Esophagus squamous epithelium (tissue), 5 donors: ENCODE measurements at regions of chr2 and their contacts with region 1.

Region 1: GRCh38 chr2:219057709-219058540 is 2.8 kb downstream of the IHH start:
- DNase-seq: no peak
- H3K4me3 ChIP-seq: peak overlapping the region in 2 of 4 donors; percentile 8 to 39
- H3K27ac ChIP-seq: no peak overlapping the region
- H3K4me1 ChIP-seq: peaks cover 34 to 46% (median 40%) of the 10 kb centered on the region in 3 donors
- H3K27me3 ChIP-seq: peaks cover 15 to 98% (median 43%) of the 10 kb centered on the region in 4 donors
- CTCF ChIP-seq: peak; percentile 63 to 92 (median 81)
- POLR2A ChIP-seq: no peak

Region 2: GRCh38 chr2:218876562-218877219 is 181.2 kb before region 1 on chr2:
- intact Hi-C with region 1: no loop called
- DNase-seq: no peak
- H3K4me3 ChIP-seq: no peak overlapping the region
- H3K27ac ChIP-seq: no peak overlapping the region
- H3K4me1 ChIP-seq: peaks cover 14 to 47% (median 17%) of the 10 kb centered on the region in 3 donors
- H3K27me3 ChIP-seq: peaks cover 0 to 98% (median 7%) of the 10 kb centered on the region in 4 donors
- CTCF ChIP-seq: peak; percentile 87 to 98 (median 94)
- POLR2A ChIP-seq: no peak

Region 3: DNA sequence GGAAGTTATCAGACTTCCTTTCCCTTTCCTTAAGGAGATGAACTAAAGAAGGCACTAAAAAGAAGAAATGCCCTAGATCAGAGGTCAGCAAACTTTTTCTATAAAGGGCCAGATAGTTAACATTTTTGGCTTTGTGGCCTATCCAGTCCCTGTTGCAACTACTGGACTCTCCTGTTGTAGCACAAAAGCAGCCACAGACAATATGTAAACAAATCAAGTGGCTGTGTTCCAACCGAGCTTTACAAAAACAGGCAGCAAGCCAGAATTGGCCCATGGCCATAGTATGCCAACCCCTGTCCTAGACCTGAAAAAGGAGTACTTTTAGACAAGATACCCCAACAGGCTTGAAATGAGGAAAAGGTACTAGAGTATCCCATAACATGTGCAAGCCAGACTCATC is 91.7 kb after region 1 on chr2:
- intact Hi-C with region 1: loop called (anchors 5 kb)
- DNase-seq: no peak
- H3K4me3 ChIP-seq: no peak overlapping the region
- H3K27ac ChIP-seq: no peak overlapping the region
- H3K4me1 ChIP-seq: peaks cover 0 to 9% (median 0%) of the 10 kb centered on the region in 3 donors
- H3K27me3 ChIP-seq: no peaks in the 10 kb centered on the region
- CTCF ChIP-seq: no peak
- POLR2A ChIP-seq: no peak

Region 4: DNA sequence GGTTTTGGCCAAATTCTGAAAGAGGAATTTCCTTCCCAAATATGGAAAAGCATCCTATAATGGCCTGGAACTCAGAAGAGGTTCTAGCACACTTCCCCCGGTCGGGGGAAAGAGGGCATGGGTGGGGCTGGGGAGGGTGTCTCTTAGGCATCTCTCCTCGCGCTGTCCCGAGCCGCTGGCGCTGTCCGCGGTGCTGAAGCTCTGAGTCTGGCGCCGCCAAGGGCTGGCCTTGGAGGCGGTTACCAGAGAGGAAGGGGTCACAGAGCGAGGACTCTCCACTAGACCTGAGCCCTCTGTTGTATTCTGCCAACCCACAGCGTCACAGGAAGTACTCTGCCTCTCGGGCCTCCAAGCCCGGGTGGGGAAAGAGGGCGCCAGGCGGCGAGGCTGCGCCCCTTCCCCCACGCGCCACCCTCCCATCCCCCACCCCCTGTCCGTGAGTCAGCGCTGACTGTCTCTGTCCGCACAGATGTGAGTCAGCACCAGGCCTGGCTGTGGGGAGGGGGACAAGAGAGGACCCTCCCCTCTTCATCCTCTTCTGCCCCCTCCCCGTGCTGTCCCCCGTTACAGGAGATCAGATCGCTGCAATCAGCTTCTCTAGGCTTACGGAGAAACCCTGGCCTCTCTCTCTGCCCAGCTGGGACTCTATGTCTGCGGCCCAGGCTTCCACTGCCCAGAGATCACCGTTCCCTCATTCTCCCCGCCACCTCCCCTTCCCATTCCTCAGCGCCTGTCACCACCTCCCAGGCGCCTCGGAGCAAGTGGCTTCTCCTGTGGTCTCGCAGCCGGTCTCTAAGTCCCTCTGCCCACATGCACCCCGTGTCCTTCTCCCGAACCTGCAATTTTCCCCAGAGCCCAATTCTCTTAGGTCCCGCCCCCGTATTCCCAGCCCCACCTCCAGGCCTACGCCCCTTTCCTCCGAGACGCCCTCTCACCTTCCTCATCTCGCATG is 250.5 kb after region 1 on chr2:
- intact Hi-C with region 1: loop called (anchors 10 kb)
- DNase-seq: no peak
- H3K4me3 ChIP-seq: no peak overlapping the region
- H3K27ac ChIP-seq: no peak overlapping the region
- H3K4me1 ChIP-seq: peaks cover 0 to 12% (median 0%) of the 10 kb centered on the region in 3 donors
- H3K27me3 ChIP-seq: peaks cover 0 to 91% (median 11%) of the 10 kb centered on the region in 4 donors
- CTCF ChIP-seq: no peak
- POLR2A ChIP-seq: no peak